GM13976 (cell line): ENCODE measurements at regions of chr2 and their contacts with region 1.

Region 1: DNA sequence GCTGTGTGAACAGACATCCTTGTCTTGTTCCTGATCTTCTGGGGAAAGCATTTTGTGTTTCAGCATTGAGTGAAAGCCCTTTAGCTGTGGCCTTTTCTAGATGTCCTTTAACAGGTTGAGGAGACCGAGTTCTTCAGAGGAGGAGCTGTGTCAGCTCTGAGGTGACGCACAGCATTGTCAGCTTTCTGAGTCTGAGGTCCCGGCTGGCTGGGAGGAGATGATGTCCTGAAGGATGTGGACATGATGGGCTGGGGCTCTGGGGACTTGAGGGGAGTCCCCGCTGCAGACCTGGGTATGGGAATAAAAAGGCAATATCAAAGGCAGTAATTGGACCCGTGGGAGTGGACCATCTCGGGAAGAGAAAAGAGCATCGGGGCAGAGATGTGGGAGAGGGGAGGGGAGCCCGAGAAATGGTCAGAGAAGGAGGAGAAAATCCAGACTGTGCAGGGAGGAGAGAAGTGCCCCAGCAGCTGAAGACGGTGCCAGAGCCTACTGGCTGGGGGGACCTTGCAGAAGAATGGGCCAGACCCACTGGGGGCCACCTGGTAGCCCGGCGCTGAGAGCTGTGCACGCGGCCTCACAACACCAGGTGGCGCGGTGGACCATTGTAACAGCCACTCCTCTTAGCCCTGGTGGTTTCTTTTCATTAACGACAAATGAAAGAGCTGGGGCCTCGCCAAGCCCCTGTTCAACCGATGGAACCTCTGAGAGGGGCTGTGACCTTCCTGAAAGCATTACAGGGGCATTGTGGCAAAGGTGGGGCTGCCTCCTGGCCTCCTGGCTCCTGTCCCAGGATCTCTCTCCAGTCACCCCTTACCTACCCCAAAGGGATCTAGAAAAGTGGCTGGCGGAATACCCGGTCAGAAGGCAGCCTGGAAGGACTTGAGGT is 61.6 kb downstream of the ST3GAL5 start:
- DNase-seq: peak; percentile 86
- CTCF ChIP-seq: peak; percentile 91

Region 2: GRCh38 chr2:85888684-85889626 is 61.7 kb after region 1 on chr2 and contains the start of gene ST3GAL5:
- in situ Hi-C with region 1: loop called (anchors 5 kb)
- DNase-seq: peak; percentile 94
- CTCF ChIP-seq: peak; percentile 81

Region 3: DNA sequence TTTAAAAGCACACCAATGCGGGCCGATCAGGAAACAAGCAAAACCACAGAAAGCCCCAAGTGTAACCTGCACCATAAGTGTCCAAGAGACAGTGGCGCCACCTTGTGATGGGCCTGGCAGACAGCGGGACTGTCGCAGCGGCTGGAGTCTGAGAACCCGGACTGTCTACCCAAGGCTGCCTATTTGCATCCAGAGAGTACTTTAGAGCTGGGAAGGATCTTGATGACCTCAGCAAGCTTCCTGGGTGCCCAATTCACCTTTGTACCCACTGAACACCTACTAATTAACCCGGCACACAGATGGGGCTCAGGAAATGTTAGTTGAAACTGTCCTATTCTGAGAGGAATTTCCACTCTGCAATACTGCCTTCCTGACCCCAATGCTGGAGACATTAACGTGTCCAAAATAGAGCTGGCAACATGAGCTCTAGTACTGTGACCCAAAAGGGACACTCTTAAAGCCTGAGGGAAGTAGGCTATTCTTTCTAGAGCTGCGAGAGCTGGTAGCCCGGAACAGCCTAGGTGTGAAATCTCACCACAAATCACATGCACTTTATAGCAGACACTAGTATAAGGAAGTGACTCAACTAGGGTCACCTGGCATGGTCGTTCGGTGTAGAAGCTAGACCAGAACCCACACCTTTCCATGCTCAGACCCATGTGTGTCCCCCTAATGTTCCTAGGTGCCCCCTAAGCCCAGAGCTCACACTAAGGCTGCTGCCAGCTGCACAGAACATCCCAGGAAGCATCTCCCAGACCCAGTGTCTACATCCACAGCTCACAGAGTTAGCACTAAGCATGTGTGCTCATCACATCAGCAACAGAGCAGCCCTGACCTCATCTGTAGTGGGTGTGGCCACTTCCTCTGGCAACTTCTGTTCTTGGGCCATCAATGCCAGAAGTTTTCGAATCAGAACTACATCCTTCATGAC is 253.0 kb after region 1 on chr2:
- in situ Hi-C with region 1: loop called (anchors 5 kb)
- DNase-seq: peak; percentile 70
- CTCF ChIP-seq: peak; percentile 87